ENCODE measurements at regions of chr17 and their contacts with region 1.

Region 1: DNA sequence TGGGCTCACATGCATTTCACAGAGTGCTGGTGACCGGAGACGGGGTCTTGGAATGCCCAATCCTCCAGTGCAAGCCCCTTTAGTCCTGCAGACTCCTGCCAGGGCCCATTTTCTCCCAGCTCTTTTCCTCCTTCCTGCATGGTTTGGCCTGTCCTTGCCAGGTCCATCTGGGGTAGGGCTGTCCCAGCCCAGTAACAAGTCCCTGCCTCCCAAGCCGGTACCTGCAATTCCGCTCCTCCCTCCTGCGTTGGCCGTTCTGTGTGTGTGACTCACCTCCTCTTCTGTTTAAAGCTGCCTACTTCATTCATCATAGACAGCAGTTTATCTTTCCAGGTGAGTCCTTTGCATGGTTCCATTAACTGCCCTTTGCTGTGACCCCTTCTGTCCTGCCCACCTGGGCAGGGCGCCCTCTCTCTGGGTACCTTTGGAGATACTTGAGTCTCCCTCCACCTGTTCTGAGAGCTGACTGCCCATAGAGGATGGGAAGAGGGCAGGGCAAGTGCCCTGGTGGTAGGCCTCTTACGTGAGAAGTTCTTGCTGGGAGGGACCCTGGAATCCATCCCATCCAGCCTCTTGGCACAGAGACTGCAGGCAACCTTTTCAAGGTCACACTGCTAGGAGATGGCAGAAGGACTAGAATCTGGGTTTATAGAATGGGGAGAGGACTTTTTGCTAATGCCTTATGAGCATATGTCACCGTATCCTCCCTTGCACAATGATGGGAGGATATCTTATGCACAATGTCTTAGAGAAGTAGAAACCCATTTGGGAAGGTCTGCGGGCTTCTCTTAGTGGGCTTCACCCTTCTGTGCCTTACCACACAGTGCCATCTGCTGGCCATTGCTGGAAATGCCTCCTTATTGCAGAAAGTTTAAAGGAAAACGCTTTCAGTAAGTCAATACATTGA is 29.7 kb upstream of the LGALS9 start:
- DNase-seq: peak; percentile 72
- H3K4me3 ChIP-seq: no peak overlapping the region
- H3K27ac ChIP-seq: no peak overlapping the region
- H3K27me3 ChIP-seq: no peaks in the 10 kb centered on the region
- CTCF ChIP-seq: peak; percentile 98

Region 2: GRCh38 chr17:27345141-27345904 is 256.0 kb before region 1 on chr17:
- CTCF ChIA-PET with region 1: interaction called, 14 read pairs
- POLR2A ChIA-PET with region 1: no interaction called
- DNase-seq: no peak
- H3K4me3 ChIP-seq: no peak overlapping the region
- H3K27ac ChIP-seq: no peak overlapping the region
- H3K27me3 ChIP-seq: no peaks in the 10 kb centered on the region
- CTCF ChIP-seq: no peak

Region 3: DNA sequence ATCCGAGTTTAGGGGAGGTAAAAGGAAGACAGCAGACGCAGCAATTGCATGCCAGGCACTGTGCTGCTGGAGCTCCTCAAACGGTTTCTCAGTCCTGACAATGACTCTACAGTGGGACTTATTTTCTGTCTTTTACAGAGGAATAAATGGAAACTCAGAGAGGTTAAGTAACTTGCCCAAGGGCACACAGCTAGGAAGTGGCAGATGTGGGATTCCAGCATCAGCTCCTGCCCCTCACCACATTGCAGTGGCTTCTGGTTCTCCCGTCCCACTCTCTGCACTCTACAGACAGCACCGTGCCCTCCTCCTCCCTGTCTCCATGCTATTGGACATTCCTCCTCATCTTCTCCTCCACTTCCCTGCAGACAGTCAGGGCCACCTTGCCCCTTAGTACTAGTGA is 219.3 kb before region 1 on chr17:
- CTCF ChIA-PET with region 1: interaction called, 10 read pairs
- POLR2A ChIA-PET with region 1: no interaction called
- DNase-seq: no peak
- H3K4me3 ChIP-seq: no peak overlapping the region
- H3K27ac ChIP-seq: no peak overlapping the region
- H3K27me3 ChIP-seq: no peaks in the 10 kb centered on the region
- CTCF ChIP-seq: no peak

Region 4: GRCh38 chr17:27413792-27414191 is 187.5 kb before region 1 on chr17:
- CTCF ChIA-PET with region 1: interaction called, 26 read pairs
- POLR2A ChIA-PET with region 1: no interaction called
- DNase-seq: no peak
- H3K4me3 ChIP-seq: no peak overlapping the region
- H3K27ac ChIP-seq: no peak overlapping the region
- H3K27me3 ChIP-seq: peaks cover 2% of the 10 kb centered on the region
- CTCF ChIP-seq: no peak

Region 5: DNA sequence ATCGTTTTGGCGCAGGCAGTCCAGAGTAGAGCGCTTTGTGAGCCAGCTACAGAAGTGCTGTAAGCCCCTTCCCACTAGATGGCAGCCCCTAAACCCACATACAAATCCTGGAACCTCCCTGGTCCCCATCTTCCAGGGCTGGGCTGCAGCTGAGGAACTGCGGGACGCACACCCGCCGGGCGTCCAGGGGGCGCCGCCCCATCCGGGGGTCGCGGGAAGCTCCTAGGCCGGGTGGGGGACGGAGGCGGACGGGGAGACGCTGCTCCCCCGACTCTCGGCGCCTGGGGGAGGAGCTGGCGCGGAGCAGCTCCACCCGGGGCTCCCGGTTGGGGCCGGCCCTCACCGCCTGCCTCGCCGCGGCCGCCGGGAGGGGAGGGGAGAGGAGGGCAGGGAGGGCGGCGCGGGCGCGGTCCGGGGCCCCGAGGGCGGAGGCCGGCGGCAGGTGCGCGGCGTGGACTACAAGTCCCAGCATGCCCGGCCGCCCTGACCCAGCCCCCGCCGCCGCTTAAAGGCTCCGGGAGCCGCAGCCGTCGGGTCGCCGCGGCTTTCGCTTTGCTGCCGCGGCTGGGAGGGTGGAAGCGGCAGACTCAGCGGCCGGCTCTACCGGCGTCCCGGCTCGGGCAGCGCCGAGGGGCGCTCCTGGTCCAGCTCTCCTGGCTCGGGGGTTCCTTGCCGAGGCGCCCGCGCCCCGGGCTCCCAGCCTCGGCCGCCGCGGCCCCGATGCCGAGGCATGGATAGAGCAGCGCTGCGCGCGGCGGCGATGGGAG is 145.2 kb before region 1 on chr17 and contains the start of gene KSR1:
- CTCF ChIA-PET with region 1: interaction called, 94 read pairs
- POLR2A ChIA-PET with region 1: interaction called, 4 read pairs
- DNase-seq: no peak
- H3K4me3 ChIP-seq: peak within 1 kb of the TSS; percentile 97
- H3K27ac ChIP-seq: peak within 1 kb of the TSS; percentile 47
- H3K27me3 ChIP-seq: no peaks in the 10 kb centered on the region
- CTCF ChIP-seq: peak; percentile 64
- polyA plus RNA-seq, gene KSR1: 28.2 and 34.9 TPM in 2 replicates

Region 6: DNA sequence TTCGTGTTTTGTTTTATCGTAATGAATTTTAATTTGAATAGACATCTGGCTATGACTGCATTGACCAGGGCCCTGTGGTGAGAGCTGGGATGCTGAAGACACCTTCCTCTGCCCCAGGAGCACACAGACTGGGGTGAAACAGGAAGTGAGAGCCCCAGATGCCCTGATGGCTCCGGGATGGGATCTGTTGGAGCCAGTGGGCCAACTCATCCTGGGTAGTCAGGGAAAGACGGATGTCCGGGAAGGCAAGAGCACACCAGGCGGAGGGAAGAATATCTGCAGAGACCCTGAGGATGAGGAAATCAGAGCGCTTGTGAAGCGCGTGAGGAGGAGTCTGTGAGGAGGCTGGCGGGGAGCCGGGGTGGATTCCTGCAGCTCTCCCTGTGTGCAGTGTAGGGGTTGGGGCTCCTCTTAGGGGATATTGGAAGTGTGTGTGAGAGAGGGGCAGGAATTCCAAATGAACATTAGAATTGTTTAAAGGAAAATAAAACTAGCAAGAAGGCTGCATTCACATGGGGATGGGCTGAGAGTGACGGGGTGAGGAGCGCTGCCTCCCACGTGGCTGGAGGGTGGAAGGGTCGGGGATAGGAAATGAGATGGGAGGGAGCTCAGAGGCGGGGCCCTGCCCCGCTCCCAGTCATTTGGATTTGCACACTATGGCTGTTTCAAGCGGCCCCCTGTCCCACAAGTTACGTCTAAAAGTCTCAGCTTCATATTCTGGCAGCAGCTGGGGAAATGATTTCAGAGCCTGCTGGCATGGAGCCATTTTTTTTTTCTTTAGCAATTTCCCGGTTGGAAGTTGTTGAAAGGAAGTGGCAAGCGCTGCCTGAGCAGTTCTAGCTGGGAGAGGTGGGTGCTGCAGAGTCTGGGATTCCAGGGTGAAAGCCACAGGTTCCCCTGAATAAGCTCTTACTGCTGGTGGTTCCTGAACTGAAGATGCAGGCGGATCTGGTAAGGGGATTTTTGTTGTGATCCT is 41.5 kb before region 1 on chr17:
- CTCF ChIA-PET with region 1: interaction called, 16 read pairs
- POLR2A ChIA-PET with region 1: interaction called, 6 read pairs
- DNase-seq: peak; percentile 75
- H3K4me3 ChIP-seq: peak overlapping the region; percentile 53
- H3K27ac ChIP-seq: peak overlapping the region; percentile 84
- H3K27me3 ChIP-seq: no peaks in the 10 kb centered on the region
- CTCF ChIP-seq: peak; percentile 55

Region 7: GRCh38 chr17:27654654-27655524 is 53.6 kb after region 1 on chr17:
- CTCF ChIA-PET with region 1: interaction called, 17 read pairs
- POLR2A ChIA-PET with region 1: no interaction called
- DNase-seq: peak; percentile 6
- H3K4me3 ChIP-seq: no peak overlapping the region
- H3K27ac ChIP-seq: no peak overlapping the region
- H3K27me3 ChIP-seq: no peaks in the 10 kb centered on the region
- CTCF ChIP-seq: peak; percentile 76